H1 (cell line): ENCODE measurements at regions of chr1 and their contacts with region 1.

Region 1: GRCh38 chr1:222387007-222387814 is 160.7 kb downstream of the HHIPL2 start:
- DNase-seq: peak in 1 of 2 experiments; percentile 77
- H3K4me3 ChIP-seq: no peak overlapping the region
- H3K27ac ChIP-seq: no peak overlapping the region
- H3K4me1 ChIP-seq: no peaks in the 10 kb centered on the region
- H3K27me3 ChIP-seq: no peaks in the 10 kb centered on the region
- CTCF ChIP-seq: peak; percentile 72 to 89 (median 73)
- EP300 ChIP-seq: no peak
- POLR2A ChIP-seq: no peak
- RAD21 ChIP-seq: peak; percentile 59 to 71

Region 2: DNA sequence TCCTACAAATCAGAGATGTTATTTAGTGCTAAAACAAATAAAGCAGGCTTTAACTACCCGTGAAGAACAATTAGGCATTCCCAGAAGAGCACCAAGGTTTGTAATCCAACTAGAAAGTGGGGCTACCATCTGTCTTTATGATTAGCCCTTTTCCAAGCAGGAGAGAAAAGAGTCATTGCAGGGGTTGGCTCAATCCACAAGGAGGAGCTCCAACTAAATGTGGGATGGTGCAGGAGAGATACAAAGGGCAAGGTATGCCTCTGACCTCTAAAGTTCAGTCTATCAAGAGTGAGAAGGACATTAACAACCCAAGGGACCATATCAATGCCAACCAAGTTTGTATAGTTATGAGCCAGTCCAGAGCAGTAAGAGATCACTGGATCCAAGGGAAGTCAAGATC is 262.6 kb before region 1 on chr1:
- CTCF ChIA-PET with region 1: interaction called, 20 read pairs
- POLR2A ChIA-PET with region 1: no interaction called
- DNase-seq: no peak
- H3K4me3 ChIP-seq: no peak overlapping the region
- H3K27ac ChIP-seq: no peak overlapping the region
- H3K4me1 ChIP-seq: no peaks in the 10 kb centered on the region
- H3K27me3 ChIP-seq: no peaks in the 10 kb centered on the region
- CTCF ChIP-seq: peak in 2 of 3 experiments; percentile 59 to 78; a peak in 3 of 4 replicates
- EP300 ChIP-seq: no peak
- POLR2A ChIP-seq: no peak
- RAD21 ChIP-seq: peak; percentile 74